PC-3 (cell line): ENCODE measurements at regions of chr7 and their contacts with region 1.

Region 1: DNA sequence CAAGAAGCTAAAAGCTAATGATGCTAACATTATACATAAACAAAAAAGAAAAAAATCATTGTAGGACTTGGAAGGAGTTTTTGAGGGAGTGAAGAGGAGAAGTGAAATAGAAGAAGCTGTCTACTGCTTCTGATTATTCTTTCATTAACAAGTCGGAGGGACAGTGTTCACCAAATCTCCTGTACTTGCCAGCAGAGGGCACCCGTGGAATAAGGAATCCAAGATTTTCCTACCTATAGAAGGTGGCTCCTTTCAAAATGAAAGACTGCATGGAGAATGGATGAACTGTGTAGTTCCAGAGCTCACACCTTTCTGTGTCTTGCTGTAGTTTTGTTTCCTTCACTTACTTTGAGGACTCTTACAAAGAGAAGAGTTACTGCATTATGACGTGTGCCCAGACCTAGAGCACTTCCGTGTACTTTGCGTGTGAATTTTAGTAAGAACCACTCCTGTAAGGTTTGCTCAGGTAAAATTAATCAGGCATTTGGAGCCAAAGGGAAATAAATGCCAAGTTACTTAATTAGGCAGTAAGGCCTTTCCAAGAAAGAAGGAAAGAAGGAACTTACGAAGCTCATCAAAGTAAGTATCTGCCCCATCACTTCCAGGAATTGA is 145.1 kb downstream of the SEMA3D start:
- DNase-seq: peak; percentile 87
- ATAC-seq: peak; percentile 98
- H3K4me3 ChIP-seq: no peak overlapping the region
- H3K27ac ChIP-seq: no peak overlapping the region
- H3K4me1 ChIP-seq: no peaks in the 10 kb centered on the region
- H3K27me3 ChIP-seq: no peaks in the 10 kb centered on the region
- CTCF ChIP-seq: peak; percentile 89

Region 2: DNA sequence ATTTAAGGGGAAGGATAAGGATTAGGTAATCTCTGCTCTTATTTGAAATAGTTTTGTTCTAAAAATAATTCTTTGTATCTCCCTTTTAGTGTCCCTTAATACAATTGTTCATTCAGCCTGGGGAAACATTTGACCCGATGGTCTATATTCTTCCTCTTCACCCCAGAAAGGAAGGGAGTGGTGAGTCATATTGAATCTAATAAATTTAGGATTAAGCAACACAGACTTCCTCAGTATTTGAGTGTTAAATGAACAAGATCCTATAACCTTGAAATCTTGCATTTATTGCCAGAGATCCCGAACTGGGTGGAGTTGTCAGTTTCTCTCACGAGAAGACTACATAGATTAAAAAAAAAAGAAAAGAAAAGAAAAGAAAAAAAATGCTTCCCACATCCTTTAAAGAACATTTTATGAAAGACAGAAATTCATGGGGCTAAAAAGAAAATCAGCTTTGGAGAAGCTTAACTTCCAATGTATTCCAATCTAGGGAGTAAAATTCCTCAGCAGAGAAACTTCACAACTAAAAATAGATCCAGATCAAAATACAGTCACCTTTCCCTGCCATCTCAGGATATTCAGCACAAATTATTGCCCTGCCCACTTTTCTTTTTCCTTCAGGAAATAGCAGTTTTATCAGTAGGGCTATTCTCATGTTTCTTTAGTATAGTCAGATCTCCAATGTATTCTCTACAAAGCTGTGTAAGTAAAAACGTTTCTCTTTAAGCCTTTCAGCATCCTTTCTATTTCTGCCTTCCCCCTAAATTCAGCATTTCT is 62.9 kb after region 1 on chr7:
- CTCF ChIA-PET with region 1: no interaction called
- POLR2A ChIA-PET with region 1: no interaction called
- intact Hi-C with region 1: loop called (anchors 5 kb)
- DNase-seq: peak; percentile 80
- ATAC-seq: peak; percentile 64
- H3K4me3 ChIP-seq: peak overlapping the region; percentile 42
- H3K27ac ChIP-seq: peak overlapping the region; percentile 81
- H3K4me1 ChIP-seq: peaks cover 40% of the 10 kb centered on the region
- H3K27me3 ChIP-seq: no peaks in the 10 kb centered on the region
- CTCF ChIP-seq: no peak

Region 3: DNA sequence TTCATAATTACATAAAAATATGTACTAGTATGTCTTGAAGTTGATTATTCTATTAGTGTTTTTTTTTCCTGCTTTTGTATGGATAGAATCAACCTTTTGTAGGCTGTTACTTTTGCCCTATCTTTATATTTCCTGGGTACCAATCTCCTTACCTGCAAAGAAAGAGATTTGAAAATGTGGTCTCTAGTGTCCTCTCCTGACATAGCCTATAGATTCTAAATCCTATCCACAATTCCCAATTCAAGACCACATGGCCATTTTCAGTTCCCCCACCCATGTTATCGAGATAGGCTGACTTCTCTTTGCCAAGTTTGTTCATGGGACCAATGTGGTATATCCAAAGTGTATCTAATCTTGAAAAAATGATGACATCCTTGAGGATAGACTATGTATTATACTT is 414.5 kb after region 1 on chr7:
- CTCF ChIA-PET with region 1: no interaction called
- POLR2A ChIA-PET with region 1: no interaction called
- intact Hi-C with region 1: loop called (anchors 2 kb)
- DNase-seq: no peak
- ATAC-seq: no peak; the same call in 1 of the 2 replicates
- H3K4me3 ChIP-seq: no peak overlapping the region
- H3K27ac ChIP-seq: no peak overlapping the region
- H3K4me1 ChIP-seq: no peaks in the 10 kb centered on the region
- H3K27me3 ChIP-seq: no peaks in the 10 kb centered on the region
- CTCF ChIP-seq: 0 out of 2 replicates have a peak, but pooled peaks have one; percentile 15

Region 4: DNA sequence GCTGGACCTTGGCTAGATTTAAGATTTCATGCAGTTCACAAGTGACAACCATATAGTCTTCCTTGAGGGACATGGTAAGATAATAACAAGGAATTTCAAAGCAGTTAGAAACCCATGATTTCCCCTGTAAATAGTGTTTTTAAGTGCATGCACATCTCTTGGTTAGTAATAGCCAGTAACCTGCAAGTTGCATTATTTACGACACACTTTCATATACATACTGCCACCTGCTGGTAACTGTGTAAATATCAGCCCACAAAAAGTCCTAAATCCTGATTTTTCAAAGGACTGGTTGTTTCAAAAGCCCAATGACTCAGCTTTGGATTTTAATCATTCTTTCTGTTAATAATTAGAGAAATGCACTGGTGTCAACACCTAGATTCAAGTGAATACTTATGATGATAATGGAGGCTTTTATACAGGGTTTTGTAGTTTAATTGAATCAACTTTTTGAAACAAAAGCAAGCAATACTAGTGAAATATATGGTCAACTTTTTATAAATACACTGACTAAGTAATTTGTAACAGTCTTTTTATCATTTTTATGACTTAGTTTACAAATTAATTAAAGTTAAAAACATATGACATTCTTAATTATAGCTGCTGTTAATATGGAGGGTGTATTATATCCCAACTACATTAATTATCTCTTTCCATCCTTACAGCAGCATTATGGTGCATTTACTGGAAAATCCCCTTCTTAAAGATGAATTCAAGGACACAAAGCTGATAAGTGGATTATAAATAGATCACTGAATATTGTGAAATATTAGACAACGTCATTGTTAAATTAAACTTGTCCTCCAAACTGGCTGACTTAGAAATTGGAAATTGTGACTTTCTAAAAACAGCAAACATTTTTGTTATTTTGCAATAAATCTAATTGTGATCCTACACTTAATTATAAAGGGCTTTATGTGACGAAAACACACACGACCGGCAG is 512.8 kb after region 1 on chr7:
- CTCF ChIA-PET with region 1: no interaction called
- POLR2A ChIA-PET with region 1: no interaction called
- intact Hi-C with region 1: loop called (anchors 2 kb)
- DNase-seq: peak; percentile 82
- ATAC-seq: peak; percentile 57
- H3K4me3 ChIP-seq: no peak overlapping the region
- H3K27ac ChIP-seq: no peak overlapping the region
- H3K4me1 ChIP-seq: no peaks in the 10 kb centered on the region
- H3K27me3 ChIP-seq: no peaks in the 10 kb centered on the region
- CTCF ChIP-seq: peak; percentile 79

Region 5: GRCh38 chr7:85829817-85830432 is 788.2 kb after region 1 on chr7:
- CTCF ChIA-PET with region 1: interaction called, 3 read pairs
- POLR2A ChIA-PET with region 1: no interaction called
- intact Hi-C with region 1: loop called (anchors 2 kb)
- DNase-seq: peak; percentile 58
- ATAC-seq: peak; percentile 77
- H3K4me3 ChIP-seq: no peak overlapping the region
- H3K27ac ChIP-seq: no peak overlapping the region
- H3K4me1 ChIP-seq: no peaks in the 10 kb centered on the region
- H3K27me3 ChIP-seq: no peaks in the 10 kb centered on the region
- CTCF ChIP-seq: peak; percentile 72